Heart right ventricle (tissue), 16 donors: ENCODE measurements at regions of chr10 and their contacts with region 1.

Region 1: GRCh38 chr10:58932126-58932525 is 244.3 kb upstream of the PHYHIPL start:
- DNase-seq: no peak
- ATAC-seq: no peak
- H3K4me3 ChIP-seq: no peak overlapping the region
- H3K27ac ChIP-seq: no peak overlapping the region
- H3K4me1 ChIP-seq: no peaks in the 10 kb centered on the region
- H3K27me3 ChIP-seq: no peaks in the 10 kb centered on the region
- CTCF ChIP-seq: no peak

Region 2: GRCh38 chr10:58576751-58577436 is 355.2 kb before region 1 on chr10:
- intact Hi-C with region 1: no loop called
- DNase-seq: no peak
- ATAC-seq: peak in 2 of 8 donors; percentile 15 to 35
- H3K4me3 ChIP-seq: no peak overlapping the region
- H3K27ac ChIP-seq: peak overlapping the region in 9 of 10 donors; percentile 25 to 77 (median 67)
- H3K4me1 ChIP-seq: peaks cover 0 to 45% (median 8%) of the 10 kb centered on the region in 9 donors
- H3K27me3 ChIP-seq: no peaks in the 10 kb centered on the region
- CTCF ChIP-seq: no peak

Region 3: DNA sequence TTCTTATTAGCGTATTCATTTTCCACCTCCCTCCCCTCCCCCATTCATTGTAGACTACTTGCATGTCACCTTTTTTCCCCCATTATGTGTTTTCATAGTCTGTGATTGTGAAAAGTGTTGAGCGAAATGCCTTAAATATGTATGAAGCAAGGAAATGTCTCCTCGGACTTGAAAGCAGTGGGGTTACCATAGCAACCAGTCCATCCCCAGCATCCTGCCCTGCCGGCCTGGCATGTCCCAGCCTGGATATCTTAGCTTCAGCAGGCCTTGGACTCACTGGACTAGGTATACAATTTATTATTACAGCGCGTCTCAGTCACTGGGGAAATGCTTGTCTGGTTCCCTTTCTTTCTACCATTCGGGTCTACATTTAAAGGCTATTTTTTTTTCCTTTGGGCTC is 135.9 kb before region 1 on chr10:
- intact Hi-C with region 1: loop called in 1 of 10 experiments (anchors 10 kb)
- DNase-seq: no peak
- ATAC-seq: no peak
- H3K4me3 ChIP-seq: no peak overlapping the region
- H3K27ac ChIP-seq: peak overlapping the region in 1 of 10 donors; percentile 9
- H3K4me1 ChIP-seq: peaks cover 0 to 13% (median 0%) of the 10 kb centered on the region in 9 donors
- H3K27me3 ChIP-seq: no peaks in the 10 kb centered on the region
- CTCF ChIP-seq: no peak

Region 4: DNA sequence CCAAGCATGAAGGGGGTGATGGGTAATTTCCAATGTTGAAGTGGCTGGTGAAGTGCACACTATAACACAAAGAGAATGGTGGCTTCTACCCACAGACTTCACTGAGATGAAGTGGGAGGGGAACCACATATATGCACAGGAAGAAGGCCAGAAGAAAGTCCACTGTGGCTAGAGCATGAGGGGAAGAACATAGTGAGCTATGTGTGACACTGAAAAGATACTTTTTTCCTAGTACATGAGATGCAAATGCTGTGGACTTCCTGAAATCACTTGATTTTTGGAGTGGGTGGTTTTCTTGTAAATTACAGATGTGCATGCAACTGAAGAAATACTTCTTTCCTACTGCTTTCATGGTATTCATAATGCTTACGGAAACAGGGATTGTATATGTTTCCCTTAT is 128.7 kb after region 1 on chr10:
- intact Hi-C with region 1: no loop called
- DNase-seq: no peak
- ATAC-seq: no peak
- H3K4me3 ChIP-seq: no peak overlapping the region
- H3K27ac ChIP-seq: no peak overlapping the region
- H3K4me1 ChIP-seq: no peaks in the 10 kb centered on the region
- H3K27me3 ChIP-seq: no peaks in the 10 kb centered on the region
- CTCF ChIP-seq: no peak